Gastrocnemius medialis (tissue), 4 donors: ENCODE measurements at regions of chr17 and their contacts with region 1.

Region 1: GRCh38 chr17:40362696-40363110 is 1.8 kb downstream of the GJD3 start:
- DNase-seq: no peak
- ATAC-seq: peak; percentile 20 to 23
- H3K4me3 ChIP-seq: peak overlapping the region; percentile 56 to 70 (median 62)
- H3K27ac ChIP-seq: no peak overlapping the region
- H3K4me1 ChIP-seq: peaks cover 6% of the 10 kb centered on the region in 2 donors
- H3K27me3 ChIP-seq: no peaks in the 10 kb centered on the region
- CTCF ChIP-seq: peak in 4 of 5 experiments; percentile 25 to 52 (median 46)
- POLR2A ChIP-seq: no peak

Region 2: GRCh38 chr17:40219073-40219860 is 143.4 kb before region 1 on chr17 and contains the start of gene WIPF2:
- in situ Hi-C with region 1: loop called in 1 of 4 experiments (anchors 25 kb)
- intact Hi-C with region 1: no loop called
- DNase-seq: peak; percentile 94 to 95
- ATAC-seq: peak; percentile 99
- H3K4me3 ChIP-seq: peak within 1 kb of the TSS; percentile 75 to 94 (median 86)
- H3K27ac ChIP-seq: peak within 1 kb of the TSS; percentile 85 to 98 (median 95)
- H3K4me1 ChIP-seq: peaks cover 0 to 12% of the 10 kb centered on the region in 2 donors
- H3K27me3 ChIP-seq: no peaks in the 10 kb centered on the region
- CTCF ChIP-seq: peak; percentile 50 to 90 (median 87)
- POLR2A ChIP-seq: peak; percentile 72 to 74
- total RNA-seq, gene WIPF2: 4.6 to 6.2 (median 5.4) TPM

Region 3: DNA sequence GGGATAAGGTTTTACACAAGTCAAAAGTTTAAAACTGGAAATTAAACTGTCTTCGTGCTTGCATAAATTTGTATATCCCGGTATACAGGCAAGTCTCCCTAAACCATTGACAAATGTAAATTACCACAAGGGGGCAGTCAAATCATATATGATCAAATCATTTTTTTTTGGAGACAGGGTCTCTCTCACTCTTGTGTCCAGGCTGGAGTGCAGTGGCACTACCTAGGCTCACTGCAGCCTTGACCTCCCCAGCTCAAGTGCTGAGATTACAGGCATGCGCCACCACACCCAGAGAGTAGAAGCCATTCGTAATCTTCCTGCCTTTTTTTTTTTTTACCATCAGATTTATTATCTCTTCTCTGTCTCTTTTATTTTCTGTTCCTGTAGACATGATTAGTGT is 36.5 kb after region 1 on chr17:
- in situ Hi-C with region 1: no loop called
- intact Hi-C with region 1: loop called (anchors 5 kb)
- DNase-seq: no peak
- ATAC-seq: peak in 1 of 2 donors; percentile 74
- H3K4me3 ChIP-seq: no peak overlapping the region
- H3K27ac ChIP-seq: no peak overlapping the region
- H3K4me1 ChIP-seq: no peaks in the 10 kb centered on the region
- H3K27me3 ChIP-seq: no peaks in the 10 kb centered on the region
- CTCF ChIP-seq: peak; percentile 47 to 71 (median 56)
- POLR2A ChIP-seq: no peak

Region 4: GRCh38 chr17:40417609-40418427 is 55.1 kb after region 1 on chr17 and contains the start of gene TOP2A:
- in situ Hi-C with region 1: loop called in 1 of 4 experiments (anchors 5 kb)
- intact Hi-C with region 1: loop called (anchors 2 kb)
- DNase-seq: peak; percentile 98 to 99
- ATAC-seq: peak; percentile 100
- H3K4me3 ChIP-seq: peak within 1 kb of the TSS; percentile 57 to 87 (median 62)
- H3K27ac ChIP-seq: peak within 1 kb of the TSS; percentile 37 to 58 (median 46)
- H3K4me1 ChIP-seq: peaks cover 6 to 10% of the 10 kb centered on the region in 2 donors
- H3K27me3 ChIP-seq: peaks cover 0 to 10% (median 5%) of the 10 kb centered on the region in 3 donors
- CTCF ChIP-seq: no peak
- POLR2A ChIP-seq: no peak
- total RNA-seq, gene TOP2A: 0.26 to 1.6 (median 1.0) TPM

Region 5: DNA sequence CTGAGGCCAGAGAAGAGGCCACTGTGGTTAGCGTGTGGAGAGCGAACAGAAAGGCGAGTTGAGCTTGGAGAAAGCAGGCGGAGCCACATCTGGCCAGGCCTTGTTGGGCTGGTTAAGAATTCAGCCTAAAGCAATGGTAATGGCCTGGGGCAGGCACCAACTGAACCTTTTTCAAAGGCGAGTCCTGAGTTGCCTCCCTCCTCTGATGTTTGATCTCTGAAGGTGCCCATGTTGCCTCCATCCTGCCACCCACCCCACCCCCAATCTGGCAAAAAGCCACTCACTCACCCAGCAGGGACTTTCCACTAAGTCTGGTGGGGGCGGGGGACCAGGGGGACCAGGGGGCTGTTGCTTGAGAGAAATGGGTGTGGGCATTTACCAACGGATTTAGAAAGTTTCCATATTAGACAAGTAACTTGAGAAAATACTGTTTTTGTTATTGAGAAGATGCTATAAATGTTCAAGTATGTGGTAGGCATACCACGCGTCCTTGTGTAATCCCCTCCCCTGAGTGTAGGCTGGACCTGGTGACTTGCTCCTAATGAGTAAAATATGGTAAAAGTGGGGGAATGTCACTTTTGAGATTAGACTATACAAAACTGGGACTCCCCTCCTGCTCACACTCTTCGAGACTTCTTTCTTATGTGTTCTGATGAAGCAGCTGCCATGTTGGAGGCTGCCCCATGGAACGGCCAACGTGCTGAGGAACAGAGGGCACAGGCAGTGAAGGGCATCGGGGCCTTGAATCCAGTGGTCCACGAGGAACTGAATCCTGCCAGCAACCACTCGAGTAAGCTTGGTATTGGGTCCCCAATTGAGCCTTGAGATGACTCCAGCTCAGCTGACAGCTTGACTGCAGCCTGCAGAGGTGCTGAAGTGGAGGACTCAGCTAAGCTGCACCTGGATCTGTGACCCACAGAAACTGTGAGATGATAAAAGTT is 168.6 kb after region 1 on chr17:
- in situ Hi-C with region 1: no loop called
- intact Hi-C with region 1: loop called (anchors 2 kb)
- DNase-seq: peak in 1 of 2 donors; percentile 11
- ATAC-seq: no peak
- H3K4me3 ChIP-seq: no peak overlapping the region
- H3K27ac ChIP-seq: peak overlapping the region in 1 of 4 donors; percentile 46
- H3K4me1 ChIP-seq: peaks cover 15 to 17% of the 10 kb centered on the region in 2 donors
- H3K27me3 ChIP-seq: no peaks in the 10 kb centered on the region
- CTCF ChIP-seq: no peak
- POLR2A ChIP-seq: no peak